ENCODE measurements at regions of chr10 and their contacts with region 1.

Region 1: GRCh38 chr10:131786756-131787605 is 113.8 kb upstream of the PPP2R2D start:
- DNase-seq: peak; percentile 52
- CTCF ChIP-seq: peak; percentile 60

Region 2: DNA sequence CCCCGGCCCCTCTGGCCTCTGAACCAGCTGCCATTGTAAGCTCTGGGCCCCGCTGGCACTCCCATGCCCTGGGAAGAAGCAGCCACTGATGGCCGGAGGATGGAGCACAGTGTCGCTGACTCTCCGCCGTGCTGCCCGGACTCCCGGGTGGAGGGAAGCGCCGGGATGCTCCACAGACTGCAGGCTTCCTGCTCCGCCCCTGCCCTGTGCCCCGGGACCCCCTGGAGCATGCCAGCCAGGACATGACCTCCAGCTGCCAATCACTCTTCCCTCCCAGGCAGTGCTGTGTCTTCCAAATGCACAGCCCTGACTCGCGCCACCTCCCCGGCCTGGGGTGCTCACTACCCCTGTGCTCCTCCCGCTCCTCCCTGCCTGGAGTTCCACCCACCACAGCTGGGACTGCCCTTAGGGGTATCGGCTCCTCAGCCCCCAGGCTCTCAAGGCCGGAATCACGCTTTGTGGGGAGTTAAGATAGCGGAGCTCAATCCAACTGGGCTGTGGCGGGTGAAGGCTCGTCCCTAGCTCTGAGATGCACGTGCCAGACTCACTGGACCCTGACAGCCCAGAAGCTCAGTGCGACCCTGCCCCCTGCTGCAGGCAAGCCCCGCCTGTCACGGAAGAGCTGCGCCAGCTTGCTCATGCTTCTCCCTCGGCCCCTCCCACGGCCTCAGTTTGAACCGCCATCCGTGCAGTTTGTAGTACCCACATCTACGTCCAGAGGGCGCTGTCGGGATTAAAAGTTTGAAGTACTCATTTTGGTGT is 333.2 kb before region 1 on chr10:
- in situ Hi-C with region 1: loop called (anchors 25 kb)
- DNase-seq: peak; percentile 64
- CTCF ChIP-seq: peak; percentile 45

Region 3: GRCh38 chr10:131676511-131677421 is 110.2 kb before region 1 on chr10:
- in situ Hi-C with region 1: no loop called
- DNase-seq: no peak
- CTCF ChIP-seq: no peak

Region 4: GRCh38 chr10:131758062-131758935 is 28.7 kb before region 1 on chr10:
- in situ Hi-C with region 1: no loop called
- DNase-seq: no peak
- CTCF ChIP-seq: no peak